Common myeloid progenitor, CD34-positive (primary cell): ENCODE measurements at regions of chr9 and their contacts with region 1.

Region 1: GRCh38 chr9:136545966-136546698 is at the start of gene NOTCH1:
- DNase-seq: peak; percentile 97 to 98 (median 97)
- H3K4me3 ChIP-seq: peak within 1 kb of the TSS; percentile 80 to 96 (median 86)
- H3K27ac ChIP-seq: peak within 1 kb of the TSS; percentile 50 to 76
- H3K4me1 ChIP-seq: peaks cover 0 to 85% (median 80%) of the 10 kb centered on the region in 4 experiments
- H3K27me3 ChIP-seq: no peaks in the 10 kb centered on the region

Region 2: GRCh38 chr9:136527721-136528691 is 18.1 kb before region 1 on chr9:
- CTCF ChIA-PET with region 1: interaction called, 20 read pairs
- POLR2A ChIA-PET with region 1: interaction called, 58 read pairs
- DNase-seq: peak in 2 of 3 donors; percentile 51 to 65
- H3K4me3 ChIP-seq: peak overlapping the region in 1 of 7 experiments; percentile 64
- H3K27ac ChIP-seq: peak overlapping the region in 1 of 2 experiments; percentile 60
- H3K4me1 ChIP-seq: peaks cover 2 to 70% (median 57%) of the 10 kb centered on the region in 4 experiments
- H3K27me3 ChIP-seq: no peaks in the 10 kb centered on the region

Region 3: DNA sequence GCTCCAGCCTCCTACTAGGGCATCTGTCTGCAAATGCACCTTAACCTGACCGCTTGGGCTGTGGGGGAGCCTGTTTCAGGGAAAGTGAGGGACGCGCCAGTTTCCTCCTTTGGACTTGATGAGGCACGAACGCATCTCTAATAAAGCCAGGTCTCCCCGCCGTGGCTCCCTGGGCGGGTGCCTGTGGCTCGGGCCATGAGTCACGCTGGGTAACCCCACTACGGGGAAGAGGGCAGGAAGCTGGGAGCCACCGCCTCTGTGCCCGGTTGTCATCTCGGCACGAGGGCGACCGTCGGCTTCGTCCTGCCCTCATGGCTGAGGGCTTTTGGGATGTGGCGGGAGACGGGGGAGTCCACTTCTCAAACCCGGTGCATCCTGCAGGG is 12.4 kb before region 1 on chr9:
- CTCF ChIA-PET with region 1: interaction called, 20 read pairs
- POLR2A ChIA-PET with region 1: interaction called, 58 read pairs
- DNase-seq: peak; percentile 78 to 84 (median 82)
- H3K4me3 ChIP-seq: peak overlapping the region in 5 of 7 experiments; percentile 1 to 61 (median 13)
- H3K27ac ChIP-seq: peak overlapping the region; percentile 58 to 83
- H3K4me1 ChIP-seq: peaks cover 2 to 97% (median 94%) of the 10 kb centered on the region in 4 experiments
- H3K27me3 ChIP-seq: no peaks in the 10 kb centered on the region